ENCODE measurements at regions of chr3 and their contacts with region 1.

Region 1: GRCh38 chr3:100068826-100069225 is 45.5 kb downstream of the FILIP1L start:
- DNase-seq: peak; percentile 90
- ATAC-seq: peak; percentile 73
- H3K4me3 Mint-ChIP-seq: peak overlapping the region; percentile 2
- H3K27ac Mint-ChIP-seq: peak overlapping the region; percentile 56
- H3K4me1 Mint-ChIP-seq: peaks cover 55% of the 10 kb centered on the region
- H3K27me3 Mint-ChIP-seq: no peaks in the 10 kb centered on the region

Region 2: GRCh38 chr3:99833617-99834205 is 235.1 kb before region 1 on chr3:
- CTCF ChIA-PET with region 1: interaction called, 12 read pairs
- POLR2A ChIA-PET with region 1: no interaction called
- DNase-seq: no peak
- ATAC-seq: no peak
- H3K4me3 Mint-ChIP-seq: no peak overlapping the region
- H3K27ac Mint-ChIP-seq: no peak overlapping the region
- H3K4me1 Mint-ChIP-seq: peaks cover 3% of the 10 kb centered on the region
- H3K27me3 Mint-ChIP-seq: no peaks in the 10 kb centered on the region

Region 3: GRCh38 chr3:100057716-100058575 is 10.9 kb before region 1 on chr3:
- CTCF ChIA-PET with region 1: interaction called, 11 read pairs
- POLR2A ChIA-PET with region 1: no interaction called
- DNase-seq: no peak
- ATAC-seq: no peak
- H3K4me3 Mint-ChIP-seq: no peak overlapping the region
- H3K27ac Mint-ChIP-seq: no peak overlapping the region
- H3K4me1 Mint-ChIP-seq: peaks cover 22% of the 10 kb centered on the region
- H3K27me3 Mint-ChIP-seq: no peaks in the 10 kb centered on the region

Region 4: GRCh38 chr3:100089812-100090668 is 21.2 kb after region 1 on chr3:
- CTCF ChIA-PET with region 1: interaction called, 84 read pairs
- POLR2A ChIA-PET with region 1: interaction called, 10 read pairs
- DNase-seq: peak; percentile 56
- ATAC-seq: peak; percentile 84
- H3K4me3 Mint-ChIP-seq: no peak overlapping the region
- H3K27ac Mint-ChIP-seq: peak overlapping the region; percentile 43
- H3K4me1 Mint-ChIP-seq: peaks cover 61% of the 10 kb centered on the region
- H3K27me3 Mint-ChIP-seq: peaks cover 3% of the 10 kb centered on the region

Region 5: DNA sequence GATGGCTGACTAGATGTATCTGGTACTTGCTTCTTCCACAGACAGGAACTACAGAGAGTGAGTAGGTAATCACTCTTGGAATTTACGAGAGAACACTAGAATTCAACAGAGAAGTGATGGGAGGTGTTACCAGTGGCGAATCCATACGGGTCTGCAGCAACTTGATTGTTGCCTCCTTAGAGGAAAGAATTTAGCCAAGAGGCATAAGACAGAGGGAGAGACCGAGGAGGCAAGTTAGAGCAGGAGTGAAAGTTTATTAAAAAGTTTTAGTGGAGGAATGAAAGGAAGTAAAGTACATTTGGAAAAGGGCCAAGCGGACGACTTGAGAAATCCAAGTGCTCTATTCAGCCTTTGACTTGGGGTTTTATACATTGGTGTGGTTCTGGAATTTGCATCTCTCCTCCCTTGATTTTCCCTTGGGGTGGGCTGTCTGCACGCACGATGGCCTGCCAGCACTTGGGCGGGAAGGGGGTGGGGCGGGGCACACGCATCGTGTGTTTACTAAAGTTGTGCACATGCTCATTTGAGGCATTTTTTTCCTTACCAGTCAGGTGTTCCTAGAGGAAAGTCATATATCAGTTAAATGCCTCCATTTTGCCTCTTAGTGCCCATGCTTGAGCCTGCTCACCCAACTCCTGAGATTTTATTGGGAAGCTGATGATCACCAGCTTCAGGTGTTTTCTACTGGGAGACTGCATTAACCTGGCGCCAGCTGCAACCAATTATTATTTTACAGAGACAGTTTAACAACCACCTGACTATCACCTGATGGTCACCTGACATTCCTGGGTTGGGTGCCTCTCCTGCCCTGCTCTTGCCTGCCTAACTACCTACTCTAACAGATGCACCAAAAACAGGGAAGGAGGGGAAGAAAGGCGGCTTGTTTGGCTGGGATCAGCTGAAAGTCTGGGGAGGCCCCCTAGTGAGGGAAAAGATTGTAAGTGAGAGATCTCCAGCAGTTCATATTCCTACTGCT is 128.4 kb after region 1 on chr3:
- CTCF ChIA-PET with region 1: no interaction called
- POLR2A ChIA-PET with region 1: no interaction called
- DNase-seq: no peak
- ATAC-seq: no peak
- H3K4me3 Mint-ChIP-seq: no peak overlapping the region
- H3K27ac Mint-ChIP-seq: no peak overlapping the region
- H3K4me1 Mint-ChIP-seq: no peaks in the 10 kb centered on the region
- H3K27me3 Mint-ChIP-seq: peaks cover 3% of the 10 kb centered on the region

Region 6: GRCh38 chr3:100254168-100254777 is 185.4 kb after region 1 on chr3:
- CTCF ChIA-PET with region 1: interaction called, 181 read pairs
- POLR2A ChIA-PET with region 1: interaction called, 7 read pairs
- DNase-seq: peak; percentile 74
- ATAC-seq: peak; percentile 92
- H3K4me3 Mint-ChIP-seq: no peak overlapping the region
- H3K27ac Mint-ChIP-seq: peak overlapping the region; percentile 16
- H3K4me1 Mint-ChIP-seq: peaks cover 24% of the 10 kb centered on the region
- H3K27me3 Mint-ChIP-seq: no peaks in the 10 kb centered on the region

Measured in activated CD8-positive, alpha-beta T cell treated with anti-CD3 and anti-CD28 coated beads, Interleukin-2, amount 10 ng/mL, durations not matched to agents 7 days and 5 days (primary cell).